A549 (cell line): ENCODE measurements at regions of chr17 and their contacts with region 1.

Region 1: DNA sequence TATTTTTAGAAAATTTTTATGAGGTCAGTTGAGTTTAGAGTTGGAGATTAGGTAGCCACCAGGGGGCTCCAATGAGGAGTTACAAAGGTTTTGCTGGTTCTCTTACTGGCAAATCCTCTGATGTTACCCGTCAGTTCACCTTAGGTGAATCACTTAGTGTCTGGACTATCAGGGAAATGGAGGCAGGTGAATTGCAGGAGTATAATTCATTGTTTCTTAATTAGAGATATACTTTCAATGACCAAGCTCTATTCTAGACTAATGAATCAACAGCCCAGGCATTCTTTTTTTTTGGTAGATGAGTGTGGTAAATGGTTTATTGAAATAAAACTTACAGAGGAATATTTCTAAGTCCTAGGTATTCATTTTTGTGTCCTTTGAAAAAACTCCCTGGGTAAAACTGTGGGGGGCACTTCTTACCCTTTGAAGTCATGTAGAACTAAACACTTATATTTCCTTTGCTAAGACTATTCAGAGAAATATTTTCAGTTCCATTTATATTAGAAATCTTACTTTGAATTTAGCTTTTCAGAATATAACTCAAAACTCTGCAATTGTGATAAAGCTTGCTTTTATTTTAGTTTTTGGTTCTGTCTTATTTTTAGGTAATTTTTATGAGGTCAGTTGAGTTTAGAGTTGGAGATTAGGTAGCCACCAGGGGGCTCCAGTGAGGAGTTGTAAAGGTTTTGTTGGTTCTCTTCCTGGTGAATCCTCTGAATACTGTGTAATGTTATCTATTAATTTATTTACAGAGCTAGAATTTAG is 17.7 kb downstream of the PSMD11 start:
- DNase-seq: peak; percentile 71 to 81
- ATAC-seq: peak; percentile 85 to 88
- H3K4me3 ChIP-seq: no peak overlapping the region
- H3K27ac ChIP-seq: no peak overlapping the region
- H3K4me1 ChIP-seq: 0 out of 3 replicates have a peak, but pooled peaks cover 3% of the 10 kb centered on the region
- CTCF ChIP-seq: peak; percentile 58
- EP300 ChIP-seq: no peak
- POLR2A ChIP-seq: no peak
- RAD21 ChIP-seq: no peak

Region 2: DNA sequence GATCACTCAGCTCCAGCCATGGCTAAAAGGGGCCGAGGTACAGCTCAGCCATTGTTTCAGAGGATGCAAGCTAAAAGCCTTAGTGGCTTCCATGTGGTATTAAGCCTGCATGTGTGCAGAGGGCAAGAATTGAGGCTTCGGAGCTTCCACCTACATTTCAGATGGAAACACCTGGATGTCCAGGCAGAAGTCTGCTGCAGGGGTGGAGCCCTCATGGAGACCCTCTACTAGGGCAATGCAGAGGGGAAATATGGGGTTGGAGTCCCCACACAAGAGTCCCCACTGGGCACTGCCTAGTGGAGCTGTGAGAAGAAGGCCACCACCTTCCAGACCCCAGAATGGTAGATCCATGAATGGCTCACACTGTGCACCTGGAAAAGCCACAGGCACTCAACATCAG is 32.4 kb before region 1 on chr17:
- CTCF ChIA-PET with region 1: interaction called, 10 read pairs
- POLR2A ChIA-PET with region 1: no interaction called
- DNase-seq: no peak
- ATAC-seq: no peak
- H3K4me3 ChIP-seq: no peak overlapping the region
- H3K27ac ChIP-seq: no peak overlapping the region
- H3K4me1 ChIP-seq: no peaks in the 10 kb centered on the region
- CTCF ChIP-seq: no peak
- EP300 ChIP-seq: no peak
- POLR2A ChIP-seq: no peak
- RAD21 ChIP-seq: no peak

Region 3: GRCh38 chr17:32486111-32486700 is 24.2 kb after region 1 on chr17:
- CTCF ChIA-PET with region 1: interaction called, 298 read pairs
- POLR2A ChIA-PET with region 1: no interaction called
- DNase-seq: peak; percentile 76 to 77
- ATAC-seq: peak; percentile 65 to 82
- H3K4me3 ChIP-seq: peak overlapping the region; percentile 94
- H3K27ac ChIP-seq: peak overlapping the region; percentile 86 to 92
- H3K4me1 ChIP-seq: peaks cover 6% of the 10 kb centered on the region; the same call in 1 of the 3 replicates
- CTCF ChIP-seq: no peak
- EP300 ChIP-seq: no peak
- POLR2A ChIP-seq: no peak
- RAD21 ChIP-seq: no peak

Region 4: GRCh38 chr17:32495359-32496231 is 33.6 kb after region 1 on chr17:
- CTCF ChIA-PET with region 1: interaction called, 298 read pairs
- POLR2A ChIA-PET with region 1: no interaction called
- DNase-seq: no peak
- ATAC-seq: peak in 1 of 2 experiments; percentile 13; a peak in 3 of 6 replicates
- H3K4me3 ChIP-seq: no peak overlapping the region
- H3K27ac ChIP-seq: peak overlapping the region in 1 of 2 experiments; percentile 29; a peak in 2 of 6 replicates
- H3K4me1 ChIP-seq: peaks cover 12% of the 10 kb centered on the region; the same call in 2 of the 3 replicates
- CTCF ChIP-seq: no peak
- EP300 ChIP-seq: no peak
- POLR2A ChIP-seq: no peak
- RAD21 ChIP-seq: no peak

Region 5: DNA sequence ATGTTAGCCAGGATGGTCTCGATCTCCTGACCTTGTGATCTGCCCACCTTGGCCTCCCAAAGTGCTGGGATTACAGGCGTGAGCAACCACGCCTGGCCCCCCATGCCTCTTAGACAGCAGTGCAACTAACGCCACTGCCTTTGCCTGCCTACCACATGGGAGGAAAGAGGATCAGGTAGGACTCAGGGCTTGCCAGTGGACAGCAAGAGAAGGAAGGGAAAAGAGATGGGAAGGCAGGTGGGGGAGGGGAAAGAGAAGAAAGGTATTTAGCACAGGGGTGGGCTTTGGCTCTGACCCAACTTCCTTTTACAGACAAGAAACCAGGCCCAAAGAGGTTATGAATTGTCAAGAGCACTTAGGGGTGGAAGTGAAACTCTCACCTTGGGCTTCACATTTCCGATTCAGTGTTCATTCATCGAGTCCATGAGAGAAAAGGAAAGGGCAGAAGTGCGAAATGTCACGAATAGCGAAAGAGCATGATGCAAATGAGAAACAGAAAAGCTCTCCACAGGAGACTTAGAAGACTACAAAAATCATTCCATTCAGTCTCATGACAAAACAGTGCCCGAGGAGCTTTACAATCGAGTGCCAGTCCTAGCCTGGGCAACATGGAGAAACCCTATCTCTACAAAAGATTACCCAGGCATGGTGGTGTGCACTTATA is 61.1 kb after region 1 on chr17:
- CTCF ChIA-PET with region 1: no interaction called
- POLR2A ChIA-PET with region 1: no interaction called
- DNase-seq: no peak
- ATAC-seq: no peak
- H3K4me3 ChIP-seq: no peak overlapping the region
- H3K27ac ChIP-seq: no peak overlapping the region
- H3K4me1 ChIP-seq: no peaks in the 10 kb centered on the region
- CTCF ChIP-seq: no peak
- EP300 ChIP-seq: no peak
- POLR2A ChIP-seq: no peak
- RAD21 ChIP-seq: no peak

Region 6: DNA sequence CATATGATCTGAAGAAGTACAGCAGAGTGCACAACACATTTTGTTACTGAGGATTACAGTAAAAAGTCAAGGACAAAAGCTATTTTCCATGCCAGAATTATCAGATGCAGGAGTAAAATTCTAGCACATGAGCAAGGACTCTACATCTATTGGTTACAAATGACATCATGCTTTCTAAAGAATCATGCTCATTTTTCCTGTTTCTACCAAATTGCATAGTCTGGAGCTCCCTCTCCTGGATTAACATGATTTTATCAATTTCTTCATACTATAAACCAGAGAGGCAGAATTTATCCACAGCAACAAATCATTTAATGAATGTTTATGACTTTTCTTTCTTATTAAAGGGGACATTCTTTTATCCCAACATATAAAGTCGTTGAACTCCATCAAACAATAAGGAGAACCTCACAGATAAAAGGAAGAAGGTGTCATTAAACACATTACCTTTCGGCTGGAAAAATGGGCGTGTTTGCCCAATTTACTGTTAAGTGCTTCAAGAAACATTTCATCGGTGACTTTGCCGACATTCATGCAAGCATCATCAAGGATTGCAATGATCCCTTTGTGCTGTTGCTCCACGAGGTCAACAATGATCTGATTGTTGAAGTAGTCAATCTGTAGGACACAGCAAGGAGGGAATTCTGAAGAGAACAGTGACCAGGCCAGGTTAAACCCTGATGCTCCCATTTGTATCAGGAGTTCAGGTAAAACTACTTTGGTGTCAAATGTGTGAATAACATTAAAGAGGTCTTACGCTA is 293.2 kb after region 1 on chr17:
- CTCF ChIA-PET with region 1: interaction called, 26 read pairs
- POLR2A ChIA-PET with region 1: no interaction called
- DNase-seq: peak; percentile 55 to 78
- ATAC-seq: peak; percentile 91 to 95
- H3K4me3 ChIP-seq: no peak overlapping the region
- H3K27ac ChIP-seq: no peak overlapping the region
- H3K4me1 ChIP-seq: no peaks in the 10 kb centered on the region
- CTCF ChIP-seq: peak; percentile 86
- EP300 ChIP-seq: no peak
- POLR2A ChIP-seq: no peak
- RAD21 ChIP-seq: peak; percentile 89 to 91